Activated T-helper 2 cell treated with anti-CD3 and anti-CD28 coated beads, Interferon-gamma antibody, Interleukin-2, Interleukin-4, amounts not matched to agents 10 μg/mL and 5 μg/mL and 100 μg/mL, durations not matched to agents 14 hours and 24 hours and 36 hours (primary cell): ENCODE measurements at regions of chr10 and their contacts with region 1.

Region 1: DNA sequence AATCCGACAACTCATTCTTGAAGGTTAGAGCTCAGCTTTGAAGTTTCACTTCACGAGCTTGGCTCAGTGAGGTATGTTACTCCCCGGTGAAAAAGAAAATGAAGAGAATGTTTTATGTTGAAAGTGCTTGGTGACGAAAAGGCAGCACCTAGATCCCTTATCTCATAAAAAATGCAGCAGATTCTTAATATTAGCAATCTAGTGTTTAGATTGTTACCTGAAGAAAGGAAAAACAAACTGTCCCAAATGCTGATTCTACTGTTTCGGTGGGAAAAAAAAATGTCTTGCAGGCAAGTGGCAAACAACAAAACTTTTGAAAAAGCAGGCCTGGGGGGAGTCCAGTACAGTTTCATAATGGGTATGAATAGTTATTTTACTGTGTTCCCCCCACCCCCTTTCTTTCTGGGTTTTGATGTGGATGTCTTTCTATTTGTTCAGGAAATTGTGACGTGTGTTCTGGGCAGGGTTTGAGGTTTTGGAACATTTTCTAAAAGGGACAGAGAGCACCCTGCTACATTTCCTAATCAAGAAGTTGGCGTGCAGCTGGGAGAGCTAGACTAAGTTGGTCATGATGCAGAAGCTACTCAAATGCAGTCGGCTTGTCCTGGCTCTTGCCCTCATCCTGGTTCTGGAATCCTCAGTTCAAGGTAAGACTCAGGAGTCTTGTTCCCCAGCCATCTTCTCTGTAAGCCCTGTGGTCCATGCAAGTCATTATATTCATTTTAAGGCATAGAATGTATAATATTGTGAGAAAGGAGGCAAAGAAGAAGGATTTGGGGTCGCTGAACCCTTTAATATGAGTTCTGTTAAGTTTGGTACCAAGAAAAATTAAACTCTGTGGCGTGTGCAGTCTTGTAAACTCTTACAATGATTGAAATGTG is at the start of gene SRGN:
- DNase-seq: peak; percentile 82
- H3K4me3 Mint-ChIP-seq: peak within 1 kb of the TSS; percentile 91
- H3K27ac Mint-ChIP-seq: peak within 1 kb of the TSS; percentile 91
- H3K4me1 Mint-ChIP-seq: peaks cover 43% of the 10 kb centered on the region
- H3K27me3 Mint-ChIP-seq: no peaks in the 10 kb centered on the region
- total RNA-seq, gene SRGN: 1,340 and 1,350 TPM in 2 replicates

Region 2: GRCh38 chr10:68811314-68812009 is 276.4 kb before region 1 on chr10:
- intact Hi-C with region 1: no loop called
- DNase-seq: no peak
- H3K4me3 Mint-ChIP-seq: no peak overlapping the region
- H3K27ac Mint-ChIP-seq: no peak overlapping the region
- H3K4me1 Mint-ChIP-seq: no peaks in the 10 kb centered on the region
- H3K27me3 Mint-ChIP-seq: no peaks in the 10 kb centered on the region

Region 3: GRCh38 chr10:68901104-68901927 is 186.5 kb before region 1 on chr10 and contains the start of gene DDX50:
- intact Hi-C with region 1: loop called (anchors 5 kb)
- DNase-seq: peak; percentile 95
- H3K4me3 Mint-ChIP-seq: peak within 1 kb of the TSS; percentile 92
- H3K27ac Mint-ChIP-seq: peak within 1 kb of the TSS; percentile 99
- H3K4me1 Mint-ChIP-seq: peaks cover 40% of the 10 kb centered on the region
- H3K27me3 Mint-ChIP-seq: peaks cover 3% of the 10 kb centered on the region
- total RNA-seq, gene DDX50: 57.0 and 63.4 TPM in 2 replicates

Region 4: GRCh38 chr10:68997211-68997610 is 90.6 kb before region 1 on chr10:
- intact Hi-C with region 1: loop called (anchors 1 kb)
- DNase-seq: no peak
- H3K4me3 Mint-ChIP-seq: no peak overlapping the region
- H3K27ac Mint-ChIP-seq: peak overlapping the region; percentile 81
- H3K4me1 Mint-ChIP-seq: peaks cover 29% of the 10 kb centered on the region
- H3K27me3 Mint-ChIP-seq: no peaks in the 10 kb centered on the region

Region 5: GRCh38 chr10:69045441-69046300 is 42.2 kb before region 1 on chr10:
- intact Hi-C with region 1: loop called (anchors 1 kb)
- DNase-seq: peak; percentile 49
- H3K4me3 Mint-ChIP-seq: peak overlapping the region; percentile 70
- H3K27ac Mint-ChIP-seq: peak overlapping the region; percentile 100
- H3K4me1 Mint-ChIP-seq: peaks cover 49% of the 10 kb centered on the region
- H3K27me3 Mint-ChIP-seq: no peaks in the 10 kb centered on the region

Region 6: DNA sequence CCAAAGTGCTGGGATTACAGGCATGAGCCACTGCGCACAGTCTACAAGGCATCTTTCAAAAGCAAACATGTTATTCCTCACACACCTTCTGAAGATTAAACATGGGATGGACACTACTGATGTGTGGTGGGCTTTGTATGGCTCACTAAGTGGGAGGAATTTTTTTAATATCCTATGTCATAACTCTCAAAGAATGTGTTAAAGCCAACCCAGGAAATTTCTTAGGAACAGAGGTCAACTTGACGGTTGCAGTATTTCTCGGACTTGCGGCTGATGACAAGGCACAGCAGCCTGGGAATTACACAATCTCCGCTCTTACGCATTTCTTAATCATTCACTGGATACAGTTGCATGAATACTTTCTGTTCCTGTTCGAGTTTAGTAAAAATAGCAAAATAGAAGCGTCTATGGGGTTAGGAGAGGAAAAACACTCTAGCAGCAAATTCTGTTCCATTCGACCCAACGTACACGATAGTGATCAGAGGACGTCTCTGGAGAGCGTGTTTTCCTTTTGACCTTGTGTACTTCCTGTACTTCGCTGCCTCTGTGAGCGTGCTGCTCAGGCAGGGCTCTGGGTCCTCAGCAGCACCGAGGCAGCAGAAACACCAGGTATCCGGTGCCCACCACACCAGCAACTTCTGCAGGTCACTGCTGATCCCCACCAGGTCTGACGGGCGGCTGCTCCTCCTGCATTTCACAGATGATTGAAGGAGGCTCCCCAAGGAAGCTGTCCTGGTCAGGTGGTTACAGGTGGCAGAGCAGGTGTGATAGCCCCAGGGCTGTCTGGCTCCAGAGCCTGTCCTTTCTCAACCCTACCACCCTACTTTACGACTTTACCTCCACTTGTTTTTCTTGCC is 26.3 kb before region 1 on chr10:
- intact Hi-C with region 1: loop called (anchors 1 kb)
- DNase-seq: peak; percentile 35
- H3K4me3 Mint-ChIP-seq: peak overlapping the region; percentile 66
- H3K27ac Mint-ChIP-seq: peak overlapping the region; percentile 86
- H3K4me1 Mint-ChIP-seq: peaks cover 64% of the 10 kb centered on the region
- H3K27me3 Mint-ChIP-seq: no peaks in the 10 kb centered on the region

Region 7: GRCh38 chr10:69179743-69180524 is 92.1 kb after region 1 on chr10 and contains the start of gene SUPV3L1:
- intact Hi-C with region 1: loop called (anchors 2 kb)
- DNase-seq: peak; percentile 83
- H3K4me3 Mint-ChIP-seq: peak within 1 kb of the TSS; percentile 99
- H3K27ac Mint-ChIP-seq: peak within 1 kb of the TSS; percentile 100
- H3K4me1 Mint-ChIP-seq: peaks cover 26% of the 10 kb centered on the region
- H3K27me3 Mint-ChIP-seq: no peaks in the 10 kb centered on the region
- total RNA-seq, gene SUPV3L1: 52.8 and 53.1 TPM in 2 replicates

Region 8: DNA sequence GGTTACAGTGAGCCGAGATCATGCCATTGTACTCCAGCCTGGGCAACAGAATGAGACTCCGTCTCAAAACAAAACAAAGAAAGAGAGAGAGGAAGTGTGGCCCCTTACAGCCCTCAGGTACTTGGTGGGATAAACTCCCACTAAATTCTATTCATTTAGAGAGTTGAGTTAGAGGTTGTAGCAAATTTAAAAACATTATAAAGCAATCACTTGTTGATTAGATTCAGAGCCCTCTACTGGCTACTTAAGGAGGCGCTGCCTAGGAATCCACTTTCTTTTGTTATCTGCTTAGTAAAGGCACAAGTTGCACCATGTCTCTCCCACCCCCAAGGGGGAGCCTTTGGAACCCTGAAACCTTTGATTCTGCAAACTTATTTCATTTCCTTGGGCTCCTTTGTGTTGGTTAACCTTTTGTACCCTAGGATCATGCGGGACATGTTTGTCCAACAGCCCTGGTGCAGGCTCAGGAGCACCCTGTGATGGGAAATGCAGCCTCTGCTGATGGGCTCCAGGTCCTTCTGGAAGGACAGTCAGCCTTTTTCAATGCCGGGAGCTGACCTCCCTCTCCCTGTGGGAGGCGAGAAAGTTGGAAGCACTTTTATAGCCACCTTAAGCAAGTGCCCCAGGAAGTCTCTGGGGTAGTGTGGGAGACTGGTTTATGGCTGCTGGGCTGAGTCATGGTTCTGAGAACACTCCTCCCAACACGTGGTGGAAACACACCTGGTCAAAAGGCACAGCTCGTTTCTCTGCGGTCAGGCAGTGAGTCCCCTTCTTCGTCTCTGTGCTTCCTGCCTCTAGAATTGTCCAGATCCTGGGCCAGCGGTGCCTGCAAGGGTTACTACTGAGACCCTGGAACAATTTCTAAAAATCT is 134.6 kb after region 1 on chr10:
- intact Hi-C with region 1: loop called (anchors 1 kb)
- DNase-seq: peak; percentile 76
- H3K4me3 Mint-ChIP-seq: peak overlapping the region; percentile 44
- H3K27ac Mint-ChIP-seq: peak overlapping the region; percentile 91
- H3K4me1 Mint-ChIP-seq: peaks cover 41% of the 10 kb centered on the region
- H3K27me3 Mint-ChIP-seq: no peaks in the 10 kb centered on the region